Sciatic nerve (tissue), 2 donors: ENCODE measurements at regions of chr6 and their contacts with region 1.

Region 1: DNA sequence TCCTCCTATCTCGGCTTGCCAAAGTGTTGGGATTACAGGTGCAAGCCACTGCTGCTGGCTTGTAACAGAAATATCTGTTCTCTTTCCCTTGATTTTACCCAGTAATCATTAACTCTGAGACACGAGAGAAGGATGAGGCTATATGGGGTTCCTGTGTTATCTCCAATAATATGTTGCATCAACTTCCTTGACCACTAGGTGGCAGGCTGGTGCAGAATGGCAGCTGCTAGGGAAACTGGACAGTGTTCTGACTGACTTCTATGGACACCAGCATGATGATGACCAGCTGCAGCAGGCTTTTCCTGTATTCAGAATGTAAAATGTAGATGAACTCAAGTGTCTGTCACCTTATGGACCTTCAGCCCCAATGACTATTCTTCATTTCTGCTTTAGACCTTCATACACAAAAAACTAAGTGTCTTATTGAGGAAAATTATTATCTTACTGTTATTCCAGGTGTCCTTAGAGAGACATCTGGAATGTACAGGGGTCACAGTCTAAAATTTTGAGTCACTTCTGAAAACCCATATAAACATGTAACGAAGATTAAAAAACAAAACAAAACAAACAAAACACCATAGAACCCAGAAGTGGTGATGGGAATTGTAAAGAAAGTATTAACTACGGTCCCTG is 20.4 kb upstream of the CD109 start:
- DNase-seq: peak; percentile 86
- ATAC-seq: peak; percentile 86

Region 2: DNA sequence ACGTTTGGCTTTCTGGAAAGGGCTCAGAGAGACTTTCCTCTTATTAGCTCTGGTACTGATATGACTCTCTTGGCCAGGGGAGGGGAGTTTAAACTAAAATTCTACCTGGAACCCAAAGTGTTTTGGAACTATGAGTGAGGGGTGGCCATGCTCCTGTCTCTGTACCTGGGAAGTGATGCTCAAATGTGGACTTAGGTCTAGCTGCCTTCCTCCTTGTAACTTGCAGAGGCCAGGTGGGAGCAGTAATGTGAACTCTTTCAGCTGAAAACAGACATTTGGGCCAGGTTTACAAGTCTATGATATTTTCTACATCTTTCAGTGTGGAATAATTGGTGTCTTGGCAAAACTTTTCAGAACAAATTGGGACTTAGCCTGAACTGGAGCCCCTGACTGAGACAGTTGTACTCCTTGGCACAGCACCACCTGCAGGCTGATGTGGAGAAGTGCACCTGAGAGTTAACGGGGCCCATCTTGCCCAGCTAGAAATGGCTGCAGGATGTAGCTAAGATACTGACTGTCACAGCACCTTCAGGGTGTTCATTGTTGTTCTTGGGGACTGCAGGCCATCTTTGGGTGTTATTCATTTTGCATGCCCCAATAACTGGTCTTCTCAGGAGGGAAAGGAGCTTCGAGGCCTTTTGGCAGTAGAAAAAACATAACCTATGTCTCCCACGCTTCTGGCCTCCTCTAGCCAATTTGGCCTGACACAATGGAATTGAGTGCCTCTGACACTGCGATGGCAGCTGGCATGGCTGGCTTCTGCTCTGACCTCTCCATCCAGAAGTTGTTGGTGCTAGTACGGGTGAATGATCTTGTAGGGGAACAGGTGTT is 57.5 kb after region 1 on chr6:
- intact Hi-C with region 1: loop called (anchors 10 kb)
- DNase-seq: peak; percentile 76
- ATAC-seq: peak; percentile 90

Region 3: DNA sequence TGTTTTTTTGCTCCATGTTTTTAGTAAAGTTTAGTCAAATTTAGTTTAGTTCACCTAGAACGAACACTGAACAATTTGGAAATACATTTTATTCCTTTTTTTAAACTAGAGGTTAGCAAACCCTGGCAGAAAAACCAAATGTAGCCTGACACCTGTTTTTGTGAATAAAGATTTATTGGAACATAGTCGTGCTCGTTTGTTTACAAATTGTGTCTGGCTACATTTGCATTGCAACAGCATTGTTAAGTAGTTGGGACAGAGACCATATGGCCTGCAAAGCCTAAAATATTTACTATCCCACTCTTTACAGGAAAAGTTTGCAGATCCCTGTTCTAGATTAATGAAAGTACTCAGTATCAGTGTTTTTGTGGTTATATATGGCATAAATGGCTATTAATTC is 77.4 kb after region 1 on chr6:
- intact Hi-C with region 1: loop called (anchors 2 kb)
- DNase-seq: no peak
- ATAC-seq: no peak